Right lobe of liver (tissue), 6 donors: ENCODE measurements at regions of chr5 and their contacts with region 1.

Region 1: DNA sequence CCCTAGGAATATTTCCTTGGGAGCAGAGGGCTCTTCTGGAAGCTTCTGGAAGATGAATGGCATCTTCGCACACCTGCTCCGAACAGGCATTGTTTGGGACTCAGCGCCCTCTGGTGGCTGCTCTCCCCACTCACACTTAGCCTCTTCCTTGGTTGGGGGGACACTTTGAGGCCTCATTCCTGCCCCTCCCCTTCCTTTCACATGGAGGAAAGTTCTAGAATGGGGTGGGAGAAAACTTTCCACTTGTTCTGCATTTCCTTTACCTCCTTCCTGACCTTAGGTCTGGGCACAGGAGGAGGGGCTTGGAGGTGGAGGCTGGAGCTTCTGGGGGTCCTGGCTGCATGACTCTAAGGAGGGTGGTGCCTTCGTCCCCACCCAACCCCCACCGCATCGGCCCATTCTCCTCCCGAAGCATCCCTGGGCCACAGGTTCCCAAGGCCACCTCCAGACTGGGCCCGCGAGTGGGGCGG is 19.3 kb upstream of the SMIM32 start:
- DNase-seq: peak; percentile 70 to 72 (median 72)
- ATAC-seq: peak; percentile 70 to 88 (median 82)
- H3K4me3 ChIP-seq: no peak overlapping the region
- H3K27ac ChIP-seq: no peak overlapping the region
- H3K4me1 ChIP-seq: no peaks in the 10 kb centered on the region
- H3K27me3 ChIP-seq: no peaks in the 10 kb centered on the region
- CTCF ChIP-seq: peak; percentile 75 to 92 (median 88)
- POLR2A ChIP-seq: no peak

Region 2: GRCh38 chr5:135880278-135880677 is 332.0 kb before region 1 on chr5:
- intact Hi-C with region 1: loop called (anchors 5 to 10 kb)
- DNase-seq: no peak
- ATAC-seq: peak in 1 of 4 donors; percentile 39
- H3K4me3 ChIP-seq: no peak overlapping the region
- H3K27ac ChIP-seq: no peak overlapping the region
- H3K4me1 ChIP-seq: no peaks in the 10 kb centered on the region
- H3K27me3 ChIP-seq: no peaks in the 10 kb centered on the region
- CTCF ChIP-seq: peak in 1 of 4 donors; percentile 15
- POLR2A ChIP-seq: no peak

Region 3: DNA sequence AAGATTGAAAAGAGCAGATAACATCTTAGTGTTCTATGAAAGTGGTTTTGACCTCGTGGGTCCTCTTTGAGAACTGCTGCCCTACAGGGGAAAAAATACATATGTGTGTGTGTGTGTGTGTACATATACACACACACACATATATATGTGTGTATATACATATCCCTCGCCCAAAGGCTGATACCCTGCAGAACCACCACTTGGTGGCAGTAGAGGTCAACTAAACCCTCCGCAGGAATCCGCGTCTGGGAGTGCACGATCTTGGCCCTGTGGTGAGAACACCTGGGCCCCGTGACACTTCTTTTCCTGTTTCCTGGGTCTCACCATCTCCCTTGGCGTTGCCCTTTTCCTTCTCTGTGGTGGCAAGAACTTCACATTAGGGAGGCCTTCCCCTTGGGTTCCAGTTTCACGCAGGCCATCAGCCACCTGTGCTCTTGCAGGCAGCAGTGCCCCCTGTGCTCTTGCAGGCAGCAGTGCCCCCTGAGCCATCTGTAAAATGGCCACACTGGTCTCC is 324.9 kb before region 1 on chr5:
- intact Hi-C with region 1: loop called (anchors 5 to 10 kb)
- DNase-seq: peak in 2 of 3 donors; percentile 57 to 73
- ATAC-seq: peak; percentile 94 to 99 (median 98)
- H3K4me3 ChIP-seq: no peak overlapping the region
- H3K27ac ChIP-seq: no peak overlapping the region
- H3K4me1 ChIP-seq: no peaks in the 10 kb centered on the region
- H3K27me3 ChIP-seq: no peaks in the 10 kb centered on the region
- CTCF ChIP-seq: peak; percentile 85 to 92 (median 86)
- POLR2A ChIP-seq: no peak